GM12878 (cell line): ENCODE measurements at regions of chr13 and their contacts with region 1.

Region 1: DNA sequence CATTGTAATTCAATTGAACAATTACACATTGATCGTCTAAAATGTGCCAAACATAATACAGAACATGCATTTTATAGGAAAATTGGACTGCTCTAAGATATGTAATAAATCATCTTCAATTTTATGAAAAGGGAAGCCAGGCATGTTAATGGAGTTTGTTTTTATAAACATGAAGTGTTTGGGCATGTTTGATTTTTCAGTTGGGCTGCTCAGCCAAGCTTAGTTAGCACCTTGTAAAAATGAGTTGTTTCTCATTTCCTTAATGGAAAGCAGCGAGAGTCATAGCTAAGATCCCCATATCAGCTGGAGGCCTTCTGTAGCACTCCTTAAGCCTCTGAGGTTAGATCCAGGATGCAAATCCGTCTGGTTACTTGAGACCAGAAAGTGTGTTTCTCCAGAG is 422.3 kb downstream of the SPRY2 start:
- DNase-seq: no peak
- ATAC-seq: peak; percentile 69
- H3K4me3 ChIP-seq: no peak overlapping the region
- H3K27ac ChIP-seq: no peak overlapping the region
- H3K4me1 ChIP-seq: no peaks in the 10 kb centered on the region
- H3K27me3 ChIP-seq: no peaks in the 10 kb centered on the region
- CTCF ChIP-seq: no peak
- EP300 ChIP-seq: no peak
- POLR2A ChIP-seq: no peak
- RAD21 ChIP-seq: no peak

Region 2: DNA sequence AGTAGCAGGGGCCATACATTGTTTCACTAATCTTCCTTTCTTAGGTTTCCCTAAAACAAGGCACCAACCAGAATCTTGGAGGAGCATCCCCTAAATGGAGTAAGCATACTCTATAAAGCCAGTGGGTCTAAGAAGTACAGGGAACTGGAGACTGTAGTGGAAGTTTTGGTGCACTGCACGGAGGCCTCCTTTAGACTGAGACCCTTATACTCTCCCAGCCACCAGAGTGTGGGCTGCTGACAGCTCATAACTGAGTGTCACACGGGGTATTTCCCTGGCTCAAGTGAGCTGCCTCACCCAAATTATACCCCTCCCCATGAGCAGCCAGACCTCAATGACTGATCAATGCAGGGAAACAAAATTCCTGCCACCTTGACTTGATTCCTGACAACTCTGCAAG is 88.2 kb before region 1 on chr13:
- CTCF ChIA-PET with region 1: no interaction called
- POLR2A ChIA-PET with region 1: no interaction called
- RAD21 ChIA-PET with region 1: no interaction called
- SMC1A ChIA-PET with region 1: no interaction called
- in situ Hi-C with region 1: no loop called
- intact Hi-C with region 1: no loop called
- DNase-seq: no peak
- ATAC-seq: no peak
- H3K4me3 ChIP-seq: no peak overlapping the region
- H3K27ac ChIP-seq: no peak overlapping the region
- H3K4me1 ChIP-seq: no peaks in the 10 kb centered on the region
- H3K27me3 ChIP-seq: no peaks in the 10 kb centered on the region
- CTCF ChIP-seq: no peak
- EP300 ChIP-seq: no peak
- POLR2A ChIP-seq: no peak
- RAD21 ChIP-seq: no peak

Region 3: GRCh38 chr13:79936368-79937136 is 17.9 kb after region 1 on chr13:
- CTCF ChIA-PET with region 1: interaction called, 4 read pairs
- POLR2A ChIA-PET with region 1: interaction called, 4 read pairs
- RAD21 ChIA-PET with region 1: no interaction called
- SMC1A ChIA-PET with region 1: interaction called, 16 read pairs
- in situ Hi-C with region 1: no loop called
- intact Hi-C with region 1: no loop called
- DNase-seq: no peak
- ATAC-seq: no peak
- H3K4me3 ChIP-seq: no peak overlapping the region
- H3K27ac ChIP-seq: no peak overlapping the region
- H3K4me1 ChIP-seq: no peaks in the 10 kb centered on the region
- H3K27me3 ChIP-seq: no peaks in the 10 kb centered on the region
- CTCF ChIP-seq: no peak
- EP300 ChIP-seq: no peak
- POLR2A ChIP-seq: no peak
- RAD21 ChIP-seq: no peak

Region 4: GRCh38 chr13:79943346-79944023 is 24.9 kb after region 1 on chr13:
- CTCF ChIA-PET with region 1: interaction called, 4 read pairs
- POLR2A ChIA-PET with region 1: no interaction called
- RAD21 ChIA-PET with region 1: no interaction called
- SMC1A ChIA-PET with region 1: interaction called, 14 read pairs
- in situ Hi-C with region 1: no loop called
- intact Hi-C with region 1: no loop called
- DNase-seq: no peak
- ATAC-seq: no peak
- H3K4me3 ChIP-seq: no peak overlapping the region
- H3K27ac ChIP-seq: no peak overlapping the region
- H3K4me1 ChIP-seq: no peaks in the 10 kb centered on the region
- H3K27me3 ChIP-seq: no peaks in the 10 kb centered on the region
- CTCF ChIP-seq: no peak
- EP300 ChIP-seq: no peak
- POLR2A ChIP-seq: no peak
- RAD21 ChIP-seq: no peak